Psoas muscle (tissue), 8 donors: ENCODE measurements at regions of chr7 and their contacts with region 1.

Region 1: GRCh38 chr7:140126435-140127034 is 50.2 kb downstream of the KDM7A start:
- DNase-seq: no peak
- ATAC-seq: no peak
- H3K4me3 ChIP-seq: no peak overlapping the region
- H3K27ac ChIP-seq: no peak overlapping the region
- H3K4me1 ChIP-seq: no peaks in the 10 kb centered on the region
- H3K27me3 ChIP-seq: no peaks in the 10 kb centered on the region
- CTCF ChIP-seq: no peak

Region 2: DNA sequence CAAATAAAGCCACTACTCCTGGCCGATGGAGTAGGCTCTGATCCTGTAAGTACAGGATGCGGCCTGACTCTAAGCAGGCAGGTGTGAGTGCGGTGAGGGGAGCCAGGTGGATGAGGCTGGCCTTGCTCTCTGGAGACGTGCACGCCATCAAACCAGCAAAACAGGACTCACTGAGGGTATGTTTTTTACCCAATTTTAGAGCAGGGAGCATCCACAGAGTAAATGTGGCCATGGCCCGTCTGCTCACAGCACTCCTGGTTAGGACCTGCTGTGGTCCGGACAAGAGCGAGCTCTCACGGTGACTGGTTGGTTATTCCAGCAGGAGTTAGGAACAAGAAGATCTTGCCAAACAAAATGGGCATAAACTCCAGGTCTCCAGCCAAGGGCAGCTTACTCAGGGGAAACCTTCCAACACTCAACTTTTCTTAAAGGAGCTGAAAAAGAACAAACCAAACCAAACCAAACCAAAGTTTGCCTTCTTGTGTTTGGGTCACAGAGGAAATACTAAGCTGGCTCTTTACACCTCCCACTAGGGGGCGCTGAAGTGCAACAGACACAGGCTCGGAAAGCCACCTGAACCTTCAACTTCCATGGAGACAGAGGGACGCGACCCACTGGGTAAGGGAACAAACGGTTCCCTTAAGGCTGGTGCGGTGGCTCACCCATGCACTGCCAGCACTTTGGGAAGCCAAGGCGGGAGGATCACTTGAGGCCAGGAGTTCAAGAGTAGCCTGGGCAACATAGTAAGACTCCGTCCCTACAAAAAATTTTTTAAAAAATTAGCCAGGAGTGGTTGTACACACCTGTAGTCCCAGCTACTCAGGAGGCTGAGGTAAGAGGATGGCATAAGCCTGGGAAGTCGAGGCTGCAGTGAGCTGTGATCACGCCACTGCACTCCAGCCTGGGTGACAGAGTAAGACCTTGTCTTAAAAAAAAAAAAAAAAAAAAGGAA is 480.7 kb before region 1 on chr7:
- intact Hi-C with region 1: no loop called
- DNase-seq: peak; percentile 82 to 89
- ATAC-seq: peak; percentile 79 to 87 (median 83)
- H3K4me3 ChIP-seq: no peak overlapping the region
- H3K27ac ChIP-seq: no peak overlapping the region
- H3K4me1 ChIP-seq: peaks cover 25% of the 10 kb centered on the region
- H3K27me3 ChIP-seq: no peaks in the 10 kb centered on the region
- CTCF ChIP-seq: peak; percentile 92

Region 3: DNA sequence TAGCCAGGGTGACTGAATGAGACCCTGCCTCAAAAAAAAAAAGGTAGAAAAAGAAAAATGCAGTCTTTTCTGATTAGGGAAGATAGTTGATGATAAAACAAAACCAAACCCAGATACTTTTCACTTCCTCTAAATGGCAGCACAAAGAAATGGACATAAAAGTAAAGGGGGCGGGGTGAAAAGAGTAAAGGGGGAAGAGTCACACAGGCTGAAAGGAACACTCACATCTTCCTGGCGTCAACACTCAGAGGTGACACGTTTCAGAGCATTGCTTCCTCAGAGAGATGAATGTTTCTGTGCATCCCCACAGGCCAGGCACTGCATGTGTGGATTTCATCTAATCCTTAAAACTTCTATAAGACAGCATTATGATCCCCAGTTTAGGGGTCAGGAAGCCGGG is 430.0 kb before region 1 on chr7:
- intact Hi-C with region 1: no loop called
- DNase-seq: no peak
- ATAC-seq: no peak
- H3K4me3 ChIP-seq: no peak overlapping the region
- H3K27ac ChIP-seq: no peak overlapping the region
- H3K4me1 ChIP-seq: peaks cover 32% of the 10 kb centered on the region
- H3K27me3 ChIP-seq: no peaks in the 10 kb centered on the region
- CTCF ChIP-seq: no peak

Region 4: GRCh38 chr7:140079121-140079536 is 47.4 kb before region 1 on chr7:
- intact Hi-C with region 1: no loop called
- DNase-seq: peak; percentile 34 to 64
- ATAC-seq: peak; percentile 76 to 88 (median 82)
- H3K4me3 ChIP-seq: no peak overlapping the region
- H3K27ac ChIP-seq: peak overlapping the region; percentile 30
- H3K4me1 ChIP-seq: peaks cover 4% of the 10 kb centered on the region
- H3K27me3 ChIP-seq: no peaks in the 10 kb centered on the region
- CTCF ChIP-seq: peak; percentile 25

Region 5: GRCh38 chr7:140093375-140093774 is 33.2 kb before region 1 on chr7:
- intact Hi-C with region 1: loop called in 1 of 2 experiments (anchors 5 kb)
- DNase-seq: no peak
- ATAC-seq: no peak
- H3K4me3 ChIP-seq: no peak overlapping the region
- H3K27ac ChIP-seq: no peak overlapping the region
- H3K4me1 ChIP-seq: no peaks in the 10 kb centered on the region
- H3K27me3 ChIP-seq: no peaks in the 10 kb centered on the region
- CTCF ChIP-seq: no peak

Region 6: DNA sequence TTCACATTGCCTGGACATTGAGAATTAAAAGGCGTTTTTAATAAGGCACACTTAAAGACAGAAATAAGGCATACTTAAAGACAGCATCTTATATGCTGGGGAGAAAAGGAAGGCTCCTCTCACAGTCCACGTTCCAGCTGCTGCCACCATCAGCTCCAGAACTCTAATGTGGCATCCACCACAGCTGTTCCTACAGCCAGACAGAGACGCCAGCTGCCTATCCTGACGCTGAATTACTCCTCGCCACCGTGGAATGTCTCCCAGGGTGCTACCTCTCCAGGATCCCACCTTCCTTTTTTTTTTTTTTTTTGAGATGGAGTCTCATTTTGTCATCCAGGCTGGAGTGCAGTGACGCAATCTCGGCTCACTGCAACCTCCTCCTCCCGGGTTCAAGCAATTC is 241.0 kb after region 1 on chr7:
- intact Hi-C with region 1: no loop called
- DNase-seq: no peak
- ATAC-seq: no peak
- H3K4me3 ChIP-seq: no peak overlapping the region
- H3K27ac ChIP-seq: no peak overlapping the region
- H3K4me1 ChIP-seq: no peaks in the 10 kb centered on the region
- H3K27me3 ChIP-seq: no peaks in the 10 kb centered on the region
- CTCF ChIP-seq: no peak